ENCODE measurements at regions of chr6 and their contacts with region 1.

Region 1: DNA sequence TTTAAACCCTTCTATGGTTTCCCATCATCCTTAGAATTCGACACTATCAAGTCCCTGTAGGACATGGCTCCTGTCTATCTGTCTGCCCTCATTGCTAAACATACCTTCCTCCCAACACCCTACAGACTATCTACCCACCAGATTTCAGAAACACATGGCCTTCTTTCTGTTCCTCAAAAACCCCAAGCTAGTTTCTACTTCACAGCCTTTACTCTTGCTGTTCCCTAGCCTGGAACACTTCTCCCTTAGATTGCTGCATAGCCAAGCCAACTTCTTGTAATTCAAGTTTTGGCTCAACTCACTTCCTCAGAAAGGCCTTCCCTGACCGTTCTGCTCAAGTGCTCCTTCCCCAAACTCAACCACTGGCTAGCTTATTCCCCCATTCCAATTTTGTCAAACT is 156.2 kb downstream of the BTBD9 start:
- DNase-seq: peak in 1 of 4 donors; percentile 30
- ATAC-seq: no peak
- H3K4me3 ChIP-seq: no peak overlapping the region
- H3K27ac ChIP-seq: no peak overlapping the region
- H3K4me1 ChIP-seq: no peaks in the 10 kb centered on the region
- H3K27me3 ChIP-seq: no peaks in the 10 kb centered on the region
- CTCF ChIP-seq: no peak
- POLR2A ChIP-seq: no peak

Region 2: DNA sequence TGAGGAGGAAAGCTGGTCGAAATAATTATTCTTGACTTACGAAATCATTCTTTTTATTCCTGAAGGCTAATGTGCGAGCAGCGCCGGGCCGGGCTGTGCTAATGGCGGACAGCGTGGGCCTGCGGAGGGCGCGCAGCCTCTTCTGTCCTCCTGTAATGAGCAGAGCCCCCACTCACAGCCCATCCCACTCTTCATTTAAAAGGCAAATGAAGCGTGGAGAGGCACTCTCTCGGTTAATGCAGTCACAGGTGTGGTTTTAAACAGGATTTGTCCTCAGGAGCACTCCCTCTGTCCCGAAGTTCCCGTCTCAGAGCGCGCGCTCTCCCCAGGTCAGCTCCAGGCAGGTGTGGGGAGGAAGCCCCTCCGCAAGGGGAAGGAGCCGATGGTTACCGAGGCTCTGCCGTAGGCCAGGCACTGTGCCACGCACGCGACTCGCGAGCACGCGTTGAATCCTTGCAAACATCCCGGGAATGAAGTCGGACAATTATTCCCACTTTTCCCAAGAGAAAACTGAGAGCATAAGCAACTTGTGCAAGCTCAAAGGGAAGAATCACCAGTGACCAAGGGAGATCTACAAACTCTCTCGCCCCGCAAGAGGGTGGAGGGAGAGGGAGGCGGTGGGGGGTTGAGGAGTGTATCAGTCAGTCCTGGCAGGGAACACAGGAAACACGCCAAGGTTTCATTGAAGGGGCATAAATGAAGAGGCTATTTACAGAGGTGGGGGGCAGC is 699.5 kb before region 1 on chr6:
- intact Hi-C with region 1: loop called (anchors 10 kb)
- DNase-seq: peak in 3 of 4 donors; percentile 26 to 43 (median 35)
- ATAC-seq: peak; percentile 54
- H3K4me3 ChIP-seq: no peak overlapping the region
- H3K27ac ChIP-seq: no peak overlapping the region
- H3K4me1 ChIP-seq: peaks cover 18% of the 10 kb centered on the region
- H3K27me3 ChIP-seq: no peaks in the 10 kb centered on the region
- CTCF ChIP-seq: no peak
- POLR2A ChIP-seq: peak in 1 of 3 donors; percentile 15

Measured in body of pancreas (tissue), 4 donors.